WTC11 (cell line): ENCODE measurements at regions of chr7 and their contacts with region 1.

Region 1: GRCh38 chr7:131480384-131481315 is 75.8 kb downstream of the PODXL start:
- DNase-seq: no peak
- ATAC-seq: 0 out of 2 replicates have a peak, but pooled peaks have one; percentile 18
- H3K4me3 Mint-ChIP-seq: no peak overlapping the region
- H3K27ac Mint-ChIP-seq: peak overlapping the region; percentile 22; the same call in 1 of the 2 replicates
- H3K4me1 Mint-ChIP-seq: peaks cover 5% of the 10 kb centered on the region
- H3K27me3 Mint-ChIP-seq: no peaks in the 10 kb centered on the region
- CTCF ChIP-seq: no peak

Region 2: DNA sequence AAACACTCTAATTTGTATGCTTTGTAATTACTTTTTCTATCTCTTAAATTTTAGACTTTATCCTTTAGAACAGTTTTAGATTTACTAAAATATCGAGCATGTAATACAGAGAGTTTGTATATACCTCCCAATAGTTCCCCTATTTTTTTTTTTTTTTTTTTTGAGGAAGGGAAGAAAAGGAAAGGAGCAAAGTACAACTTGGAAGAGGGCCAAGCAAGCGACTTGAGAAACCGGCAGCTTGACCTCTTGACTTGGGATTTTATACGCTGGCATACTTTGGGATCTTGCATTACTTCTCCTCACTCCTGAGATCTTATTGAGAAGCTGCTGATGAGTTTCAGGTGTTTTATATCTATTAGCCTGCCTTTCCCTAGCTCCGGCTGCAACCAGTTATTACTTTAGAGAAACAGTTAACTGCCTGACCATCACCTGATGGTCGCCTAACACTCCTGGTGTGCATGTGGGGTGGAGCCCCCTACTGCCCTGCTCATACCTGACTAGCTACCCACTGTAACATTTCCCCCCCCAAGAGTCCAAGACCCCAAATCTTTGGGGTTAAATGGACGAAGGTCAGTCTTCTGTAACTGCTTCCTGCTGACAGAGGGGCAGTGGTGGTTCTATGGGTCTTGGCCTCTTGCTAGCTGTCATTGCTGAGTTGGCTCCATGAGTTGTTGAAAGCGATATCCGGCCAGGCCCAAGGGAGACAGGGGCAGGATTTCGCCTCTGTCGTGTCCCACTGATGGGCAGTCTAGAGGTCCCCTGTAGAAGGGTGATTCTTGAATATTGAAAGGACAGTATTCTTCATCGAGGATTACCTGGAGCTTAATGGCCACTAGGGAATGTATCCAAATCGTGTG is 124.5 kb before region 1 on chr7:
- CTCF ChIA-PET with region 1: no interaction called
- POLR2A ChIA-PET with region 1: interaction called, 11 read pairs
- DNase-seq: no peak
- ATAC-seq: peak; percentile 48
- H3K4me3 Mint-ChIP-seq: no peak overlapping the region
- H3K27ac Mint-ChIP-seq: peak overlapping the region; percentile 14; the same call in 1 of the 2 replicates
- H3K4me1 Mint-ChIP-seq: peaks cover 68% of the 10 kb centered on the region
- H3K27me3 Mint-ChIP-seq: no peaks in the 10 kb centered on the region
- CTCF ChIP-seq: no peak

Region 3: DNA sequence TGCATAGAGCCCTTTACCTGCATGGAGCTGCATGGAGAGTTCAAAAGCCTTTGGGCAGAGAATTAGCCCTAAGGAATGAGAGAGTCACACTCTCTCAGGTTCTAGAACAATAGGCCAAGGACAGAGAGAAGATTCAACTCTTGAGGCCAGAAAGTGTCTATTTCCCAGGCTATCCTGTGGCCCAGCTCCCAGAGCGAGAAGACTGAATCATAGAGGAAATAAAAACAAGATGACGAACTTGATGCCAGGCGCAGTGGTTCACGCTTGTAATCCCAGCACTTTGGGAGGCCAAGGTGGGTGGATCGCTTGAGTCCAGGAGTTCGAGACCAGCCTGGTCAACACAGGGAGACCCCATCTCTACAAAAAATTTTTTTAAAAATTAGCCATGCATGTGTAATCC is 94.1 kb after region 1 on chr7:
- CTCF ChIA-PET with region 1: no interaction called
- POLR2A ChIA-PET with region 1: no interaction called
- DNase-seq: no peak
- ATAC-seq: no peak
- H3K4me3 Mint-ChIP-seq: no peak overlapping the region
- H3K27ac Mint-ChIP-seq: no peak overlapping the region
- H3K4me1 Mint-ChIP-seq: peaks cover 23% of the 10 kb centered on the region
- H3K27me3 Mint-ChIP-seq: peaks cover 10% of the 10 kb centered on the region
- CTCF ChIP-seq: no peak